Naive thymus-derived CD4-positive, alpha-beta T cell (primary cell): ENCODE measurements at regions of chr6 and their contacts with region 1.

Region 1: GRCh38 chr6:85678602-85679444 is 36.1 kb upstream of the SYNCRIP start:
- DNase-seq: peak; percentile 97 to 99 (median 98)
- ATAC-seq: peak; percentile 96
- H3K4me3 ChIP-seq: peak overlapping the region; percentile 98
- H3K4me3 Mint-ChIP-seq: peak overlapping the region; percentile 93 to 100 (median 98)
- H3K27ac ChIP-seq: peak overlapping the region; percentile 93
- H3K27ac Mint-ChIP-seq: peak overlapping the region; percentile 96 to 100 (median 99)
- H3K4me1 ChIP-seq: peaks cover 23 to 26% of the 10 kb centered on the region in 2 donors
- H3K4me1 Mint-ChIP-seq: peaks cover 26 to 51% (median 40%) of the 10 kb centered on the region in 7 donors
- H3K27me3 ChIP-seq: no peaks in the 10 kb centered on the region
- H3K27me3 Mint-ChIP-seq: peaks cover 0 to 4% (median 0%) of the 10 kb centered on the region in 5 donors

Region 2: DNA sequence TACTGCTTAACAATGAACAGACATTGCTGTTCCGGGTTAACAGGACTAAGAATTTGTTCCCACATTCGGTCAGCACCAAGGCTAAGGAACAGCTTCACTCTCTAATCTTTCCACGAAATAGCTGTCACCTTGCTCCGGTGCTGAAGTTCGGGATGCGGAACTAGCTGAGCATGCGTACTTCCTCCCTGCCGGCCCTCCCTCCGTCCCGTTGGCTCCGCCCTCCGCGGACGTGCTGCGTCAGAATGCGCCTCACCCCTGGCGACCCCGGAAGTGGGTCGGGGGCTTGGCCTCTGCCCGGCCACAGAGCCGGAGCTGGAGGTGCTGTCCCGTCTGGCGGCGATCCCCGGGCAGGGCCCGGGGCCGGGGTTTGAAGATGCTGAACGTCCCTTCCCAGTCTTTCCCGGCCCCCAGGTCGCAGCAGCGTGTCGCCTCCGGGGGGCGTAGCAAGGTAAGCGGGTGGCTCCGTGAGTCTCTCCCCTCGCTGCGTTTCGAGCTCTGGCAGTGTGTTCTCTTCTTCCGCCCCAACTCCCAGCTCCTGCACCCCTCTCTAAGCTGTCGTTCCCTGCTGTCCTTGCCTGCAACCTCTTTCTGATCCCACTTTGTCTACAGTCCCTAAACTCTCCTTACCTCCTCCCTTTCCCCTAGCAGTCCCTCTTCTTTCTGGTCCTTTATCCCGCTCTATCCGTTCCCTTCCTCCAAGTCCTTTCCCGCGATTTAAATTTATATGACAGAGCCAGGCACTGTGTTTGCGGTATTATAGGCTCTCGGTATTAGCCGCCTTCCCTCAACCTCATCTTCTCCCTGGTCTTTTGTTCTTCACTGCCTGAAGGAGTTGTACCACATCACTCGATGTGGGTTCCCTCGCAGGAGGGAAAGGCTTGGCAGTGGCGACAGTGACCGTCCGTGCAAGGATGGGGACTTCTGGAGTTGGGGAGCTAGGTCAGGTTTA is 1819.1 kb before region 1 on chr6 and contains the start of gene CYB5R4:
- CTCF ChIA-PET with region 1: no interaction called
- POLR2A ChIA-PET with region 1: no interaction called
- intact Hi-C with region 1: loop called in 1 of 2 experiments (anchors 1 kb)
- DNase-seq: peak; percentile 88 to 95 (median 94)
- ATAC-seq: peak; percentile 98
- H3K4me3 ChIP-seq: peak within 1 kb of the TSS; percentile 92
- H3K4me3 Mint-ChIP-seq: peak within 1 kb of the TSS; percentile 87 to 100 (median 98)
- H3K27ac ChIP-seq: peak within 1 kb of the TSS; percentile 82
- H3K27ac Mint-ChIP-seq: peak within 1 kb of the TSS; percentile 85 to 96 (median 91)
- H3K4me1 ChIP-seq: peaks cover 14 to 21% of the 10 kb centered on the region in 2 donors
- H3K4me1 Mint-ChIP-seq: peaks cover 23 to 47% (median 37%) of the 10 kb centered on the region in 7 donors
- H3K27me3 ChIP-seq: no peaks in the 10 kb centered on the region
- H3K27me3 Mint-ChIP-seq: peaks cover 8 to 18% (median 16%) of the 10 kb centered on the region in 5 donors
- total RNA-seq, gene CYB5R4: 17.8 to 38.6 (median 21.0) TPM

Region 3: DNA sequence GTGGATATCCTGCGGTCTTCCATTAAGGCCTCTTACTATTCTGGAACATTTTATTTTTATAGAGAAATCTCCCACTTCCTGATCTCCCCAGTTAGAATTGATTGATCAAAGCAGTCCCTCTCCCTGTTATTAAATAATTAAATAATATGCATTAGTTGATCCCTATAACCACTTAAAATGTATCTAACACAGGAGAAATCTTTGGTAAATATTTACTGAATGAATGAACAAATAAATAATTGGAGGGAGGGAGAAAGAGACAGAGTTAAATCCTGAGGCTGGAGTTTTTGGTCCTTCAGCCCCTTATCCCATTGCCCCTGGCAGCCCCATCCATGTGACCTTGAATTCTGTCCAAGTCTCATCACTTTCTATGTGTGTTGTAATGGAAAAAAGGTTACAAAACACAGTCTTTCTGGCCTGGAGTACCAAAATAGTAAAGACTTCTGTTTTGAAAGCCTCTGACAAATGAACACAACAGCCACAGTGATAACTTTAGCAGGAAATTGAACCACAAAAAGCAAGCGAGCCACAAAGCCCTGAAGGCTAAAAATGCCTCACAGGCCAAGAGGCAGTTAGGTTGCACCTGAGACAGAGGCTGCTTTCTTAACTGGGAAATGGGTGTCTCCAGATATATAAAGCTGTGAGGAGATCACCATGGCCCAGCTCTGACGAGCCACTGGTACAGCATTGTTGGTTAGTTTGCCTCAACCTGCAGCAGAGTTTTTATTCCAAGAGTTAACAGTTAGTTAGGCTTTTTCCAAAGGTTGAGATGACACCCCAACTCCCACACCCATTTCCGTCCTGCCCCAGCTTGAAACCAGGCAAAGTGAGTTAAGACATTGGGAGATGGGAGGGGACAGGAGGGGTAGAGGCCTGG is 217.7 kb before region 1 on chr6:
- CTCF ChIA-PET with region 1: no interaction called
- POLR2A ChIA-PET with region 1: no interaction called
- intact Hi-C with region 1: loop called in 1 of 2 experiments (anchors 2 kb)
- DNase-seq: peak in 6 of 9 donors; percentile 17 to 53 (median 46)
- ATAC-seq: peak; percentile 54
- H3K4me3 ChIP-seq: no peak overlapping the region
- H3K4me3 Mint-ChIP-seq: peak overlapping the region in 7 of 10 donors; percentile 32 to 72 (median 68)
- H3K27ac ChIP-seq: no peak overlapping the region
- H3K27ac Mint-ChIP-seq: peak overlapping the region in 8 of 9 donors; percentile 38 to 92 (median 71)
- H3K4me1 ChIP-seq: peaks cover 9 to 25% of the 10 kb centered on the region in 2 donors
- H3K4me1 Mint-ChIP-seq: peaks cover 23 to 95% (median 63%) of the 10 kb centered on the region in 7 donors
- H3K27me3 ChIP-seq: no peaks in the 10 kb centered on the region
- H3K27me3 Mint-ChIP-seq: peaks cover 0 to 30% (median 28%) of the 10 kb centered on the region in 5 donors

Region 4: GRCh38 chr6:85593438-85594196 is 85.2 kb before region 1 on chr6 and contains the start of gene SNX14:
- CTCF ChIA-PET with region 1: interaction called, 7 read pairs
- POLR2A ChIA-PET with region 1: interaction called, 93 read pairs
- intact Hi-C with region 1: loop called (anchors 1 kb)
- DNase-seq: peak; percentile 59 to 81 (median 73)
- ATAC-seq: peak; percentile 81
- H3K4me3 ChIP-seq: peak within 1 kb of the TSS; percentile 91
- H3K4me3 Mint-ChIP-seq: peak within 1 kb of the TSS; percentile 88 to 98 (median 96)
- H3K27ac ChIP-seq: peak within 1 kb of the TSS; percentile 86
- H3K27ac Mint-ChIP-seq: peak within 1 kb of the TSS; percentile 81 to 97 (median 93)
- H3K4me1 ChIP-seq: peaks cover 5 to 21% of the 10 kb centered on the region in 2 donors
- H3K4me1 Mint-ChIP-seq: peaks cover 29 to 58% (median 47%) of the 10 kb centered on the region in 7 donors
- H3K27me3 ChIP-seq: no peaks in the 10 kb centered on the region
- H3K27me3 Mint-ChIP-seq: peaks cover 0 to 9% (median 0%) of the 10 kb centered on the region in 5 donors
- total RNA-seq, gene SNX14: 37.3 to 71.8 (median 53.3) TPM

Region 5: GRCh38 chr6:85650606-85651005 is 28.2 kb before region 1 on chr6:
- CTCF ChIA-PET with region 1: no interaction called
- POLR2A ChIA-PET with region 1: interaction called, 593 read pairs
- intact Hi-C with region 1: no loop called
- DNase-seq: no peak
- ATAC-seq: no peak
- H3K4me3 ChIP-seq: no peak overlapping the region
- H3K4me3 Mint-ChIP-seq: no peak overlapping the region
- H3K27ac ChIP-seq: no peak overlapping the region
- H3K27ac Mint-ChIP-seq: no peak overlapping the region
- H3K4me1 ChIP-seq: no peaks in the 10 kb centered on the region
- H3K4me1 Mint-ChIP-seq: peaks cover 0 to 2% (median under 1%) of the 10 kb centered on the region in 7 donors
- H3K27me3 ChIP-seq: no peaks in the 10 kb centered on the region
- H3K27me3 Mint-ChIP-seq: peaks cover 0 to 14% (median 0%) of the 10 kb centered on the region in 5 donors